Aorta (tissue), 5 donors: ENCODE measurements at regions of chrX and their contacts with region 1.

Region 1: GRCh38 chrX:54357414-54358377 is at the start of gene WNK3:
- DNase-seq: peak; percentile 87 to 91
- ATAC-seq: peak; percentile 93
- H3K4me3 ChIP-seq: peak within 1 kb of the TSS; percentile 57 to 61
- H3K27ac ChIP-seq: peak within 1 kb of the TSS; percentile 36 to 90
- H3K4me1 ChIP-seq: no peaks in the 10 kb centered on the region
- H3K27me3 ChIP-seq: no peaks in the 10 kb centered on the region
- total RNA-seq, gene WNK3: 3.3 to 6.2 TPM

Region 2: GRCh38 chrX:54157561-54157960 is 200.1 kb before region 1 on chrX:
- intact Hi-C with region 1: no loop called
- DNase-seq: no peak
- ATAC-seq: no peak
- H3K4me3 ChIP-seq: no peak overlapping the region
- H3K27ac ChIP-seq: no peak overlapping the region
- H3K4me1 ChIP-seq: no peaks in the 10 kb centered on the region
- H3K27me3 ChIP-seq: no peaks in the 10 kb centered on the region

Region 3: DNA sequence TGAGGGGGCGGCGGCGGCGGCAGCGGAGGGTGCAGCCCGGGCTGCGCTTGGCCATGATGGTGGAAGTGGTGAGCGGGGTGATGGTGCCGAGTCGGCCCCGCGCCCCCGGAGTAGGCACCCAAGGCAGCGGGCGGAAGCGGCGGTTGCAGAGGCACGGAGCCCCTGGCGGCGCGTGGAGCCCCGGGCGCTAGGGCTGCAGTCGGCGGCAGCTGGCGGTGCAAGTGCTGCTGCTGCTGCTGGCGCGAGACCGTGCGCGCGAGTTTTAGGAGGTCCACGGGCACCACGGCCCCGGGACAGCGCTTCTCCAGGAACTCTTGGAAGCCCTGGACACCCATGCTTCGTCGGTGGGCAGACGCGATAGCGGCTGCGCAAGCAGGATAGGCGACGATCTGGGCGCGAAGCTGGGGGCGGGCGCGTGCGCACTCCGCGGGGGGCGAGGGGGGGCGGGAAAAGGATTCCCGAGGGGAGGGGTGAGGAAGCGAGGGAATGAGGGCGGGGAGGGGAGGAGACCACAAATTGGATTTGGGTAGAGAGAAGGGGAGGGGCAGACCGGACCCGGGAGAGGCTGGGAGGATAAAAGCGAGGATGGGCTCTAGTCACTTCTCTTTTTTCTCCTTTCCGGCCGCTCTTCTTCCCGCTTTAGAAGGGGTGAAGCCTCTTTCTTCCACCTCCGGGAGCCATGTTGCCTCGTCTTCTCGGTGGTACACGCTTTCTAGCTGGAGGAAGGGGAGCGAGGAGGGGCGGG is 174.7 kb before region 1 on chrX and contains the start of gene FAM120C:
- intact Hi-C with region 1: loop called in 1 of 2 experiments (anchors 10 kb)
- DNase-seq: peak; percentile 76 to 88
- ATAC-seq: peak; percentile 93
- H3K4me3 ChIP-seq: peak within 1 kb of the TSS; percentile 46 to 90
- H3K27ac ChIP-seq: peak within 1 kb of the TSS in 1 of 2 donors; percentile 83
- H3K4me1 ChIP-seq: no peaks in the 10 kb centered on the region
- H3K27me3 ChIP-seq: no peaks in the 10 kb centered on the region
- total RNA-seq, gene FAM120C: 10.1 to 14.1 TPM

Region 4: DNA sequence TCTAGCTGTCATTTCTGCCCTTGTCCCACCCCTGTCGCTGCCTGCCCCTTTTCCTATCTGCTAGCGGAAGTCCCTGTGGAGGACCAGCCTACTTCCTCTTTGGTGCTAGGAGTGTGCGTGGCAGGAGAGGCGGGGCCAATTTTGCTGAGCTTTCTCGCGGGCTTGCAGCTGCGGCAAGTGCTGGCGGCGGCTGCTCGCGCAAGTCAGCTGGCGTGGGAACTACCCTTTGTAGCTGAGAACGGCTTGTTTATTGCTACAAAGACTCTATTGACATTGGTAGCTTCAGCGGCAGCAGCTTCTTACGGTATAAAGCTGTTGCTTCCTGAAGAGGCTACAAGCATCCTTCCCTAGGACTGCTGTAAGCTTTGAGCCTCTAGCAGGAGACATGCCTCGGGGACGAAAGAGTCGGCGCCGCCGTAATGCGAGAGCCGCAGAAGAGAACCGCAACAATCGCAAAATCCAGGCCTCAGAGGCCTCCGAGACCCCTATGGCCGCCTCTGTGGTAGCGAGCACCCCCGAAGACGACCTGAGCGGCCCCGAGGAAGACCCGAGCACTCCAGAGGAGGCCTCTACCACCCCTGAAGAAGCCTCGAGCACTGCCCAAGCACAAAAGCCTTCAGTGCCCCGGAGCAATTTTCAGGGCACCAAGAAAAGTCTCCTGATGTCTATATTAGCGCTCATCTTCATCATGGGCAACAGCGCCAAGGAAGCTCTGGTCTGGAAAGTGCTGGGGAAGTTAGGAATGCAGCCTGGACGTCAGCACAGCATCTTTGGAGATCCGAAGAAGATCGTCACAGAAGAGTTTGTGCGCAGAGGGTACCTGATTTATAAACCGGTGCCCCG is 1094.5 kb after region 1 on chrX and contains the start of gene MAGEH1:
- intact Hi-C with region 1: loop called in 1 of 2 experiments (anchors 10 kb)
- DNase-seq: peak; percentile 91 to 92
- ATAC-seq: peak; percentile 93
- H3K4me3 ChIP-seq: peak within 1 kb of the TSS; percentile 79 to 97
- H3K27ac ChIP-seq: peak within 1 kb of the TSS in 1 of 2 donors; percentile 95
- H3K4me1 ChIP-seq: no peaks in the 10 kb centered on the region
- H3K27me3 ChIP-seq: no peaks in the 10 kb centered on the region
- total RNA-seq, gene MAGEH1: 32.3 to 37.2 TPM